CD4-positive, alpha-beta memory T cell (primary cell): ENCODE measurements at regions of chr6 and their contacts with region 1.

Region 1: GRCh38 chr6:26234421-26235296 is 130.3 kb upstream of the BTN3A2 start:
- DNase-seq: peak; percentile 70 to 87 (median 85)
- H3K4me3 ChIP-seq: peak overlapping the region; percentile 66 to 95
- H3K4me3 Mint-ChIP-seq: peak overlapping the region; percentile 93 to 99 (median 96)
- H3K27ac ChIP-seq: peak overlapping the region; percentile 83
- H3K27ac Mint-ChIP-seq: peak overlapping the region; percentile 90 to 99 (median 96)
- H3K4me1 ChIP-seq: peaks cover 23% of the 10 kb centered on the region
- H3K4me1 Mint-ChIP-seq: peaks cover 18 to 43% (median 26%) of the 10 kb centered on the region in 4 donors
- H3K27me3 ChIP-seq: no peaks in the 10 kb centered on the region
- H3K27me3 Mint-ChIP-seq: no peaks in the 10 kb centered on the region

Region 2: GRCh38 chr6:24431045-24431451 is 1803.6 kb before region 1 on chr6:
- CTCF ChIA-PET with region 1: no interaction called
- POLR2A ChIA-PET with region 1: no interaction called
- intact Hi-C with region 1: no loop called
- DNase-seq: peak in 4 of 5 donors; percentile 15 to 33 (median 28)
- H3K4me3 ChIP-seq: no peak overlapping the region
- H3K4me3 Mint-ChIP-seq: no peak overlapping the region
- H3K27ac ChIP-seq: no peak overlapping the region
- H3K27ac Mint-ChIP-seq: no peak overlapping the region
- H3K4me1 ChIP-seq: no peaks in the 10 kb centered on the region
- H3K4me1 Mint-ChIP-seq: peaks cover 0 to 1% (median 0%) of the 10 kb centered on the region in 4 donors
- H3K27me3 ChIP-seq: no peaks in the 10 kb centered on the region
- H3K27me3 Mint-ChIP-seq: no peaks in the 10 kb centered on the region

Region 3: GRCh38 chr6:26054857-26055669 is 179.6 kb before region 1 on chr6:
- CTCF ChIA-PET with region 1: no interaction called
- POLR2A ChIA-PET with region 1: interaction called, 23 read pairs
- intact Hi-C with region 1: no loop called
- DNase-seq: peak; percentile 89 to 96 (median 91)
- H3K4me3 ChIP-seq: peak overlapping the region; percentile 67 to 78
- H3K4me3 Mint-ChIP-seq: peak overlapping the region; percentile 93 to 96 (median 94)
- H3K27ac ChIP-seq: peak overlapping the region; percentile 84
- H3K27ac Mint-ChIP-seq: peak overlapping the region; percentile 91 to 98 (median 98)
- H3K4me1 ChIP-seq: peaks cover 24% of the 10 kb centered on the region
- H3K4me1 Mint-ChIP-seq: peaks cover 7 to 34% (median 15%) of the 10 kb centered on the region in 4 donors
- H3K27me3 ChIP-seq: no peaks in the 10 kb centered on the region
- H3K27me3 Mint-ChIP-seq: no peaks in the 10 kb centered on the region

Region 4: DNA sequence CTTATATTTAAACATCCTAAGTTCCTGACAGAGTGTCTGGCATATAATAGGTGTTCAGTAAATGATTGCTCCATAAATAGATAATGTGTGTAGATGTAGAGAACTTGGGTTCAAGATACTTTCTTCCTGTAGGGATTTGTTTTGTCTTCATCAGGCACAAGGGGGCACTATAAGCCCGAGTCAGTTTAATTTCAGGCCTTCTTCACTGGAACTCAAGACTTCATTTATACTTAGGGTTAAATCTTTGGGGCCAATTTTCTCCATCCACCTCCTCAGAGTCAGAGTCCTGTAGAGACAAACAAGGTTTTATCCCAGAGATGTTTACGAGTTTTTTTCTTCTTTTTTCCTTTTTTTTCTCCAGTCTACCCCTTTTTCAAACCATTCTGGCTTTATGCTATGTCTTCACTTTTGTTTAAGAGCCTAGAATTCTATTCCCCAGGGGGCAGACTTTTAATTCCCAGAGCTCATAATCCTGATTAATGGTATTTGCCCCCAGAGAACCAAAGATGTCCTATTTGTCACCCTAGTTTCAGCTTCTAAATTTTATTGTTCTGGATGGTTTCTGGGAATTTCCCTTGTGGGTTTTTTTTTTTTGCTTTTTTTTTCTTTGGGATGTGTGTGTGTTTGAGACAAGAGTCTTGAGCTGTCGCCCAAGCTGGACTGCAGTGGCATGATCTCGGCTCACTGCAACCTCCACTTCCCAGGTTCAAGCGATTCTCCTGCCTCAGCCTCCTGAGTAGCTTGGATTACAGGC is 59.1 kb before region 1 on chr6:
- CTCF ChIA-PET with region 1: interaction called, 5 read pairs
- POLR2A ChIA-PET with region 1: interaction called, 85 read pairs
- intact Hi-C with region 1: no loop called
- DNase-seq: peak; percentile 50 to 73 (median 70)
- H3K4me3 ChIP-seq: no peak overlapping the region
- H3K4me3 Mint-ChIP-seq: peak overlapping the region in 4 of 8 donors; percentile 37 to 70 (median 65)
- H3K27ac ChIP-seq: no peak overlapping the region
- H3K27ac Mint-ChIP-seq: peak overlapping the region; percentile 28 to 89 (median 78)
- H3K4me1 ChIP-seq: peaks cover 37% of the 10 kb centered on the region
- H3K4me1 Mint-ChIP-seq: peaks cover 21 to 40% (median 27%) of the 10 kb centered on the region in 4 donors
- H3K27me3 ChIP-seq: no peaks in the 10 kb centered on the region
- H3K27me3 Mint-ChIP-seq: no peaks in the 10 kb centered on the region

Region 5: GRCh38 chr6:26196846-26197648 is 37.6 kb before region 1 on chr6:
- CTCF ChIA-PET with region 1: interaction called, 16 read pairs
- POLR2A ChIA-PET with region 1: interaction called, 502 read pairs
- intact Hi-C with region 1: loop called (anchors 1 kb)
- DNase-seq: peak; percentile 92 to 93 (median 92)
- H3K4me3 ChIP-seq: peak overlapping the region; percentile 83 to 97
- H3K4me3 Mint-ChIP-seq: peak overlapping the region; percentile 94 to 99 (median 97)
- H3K27ac ChIP-seq: peak overlapping the region; percentile 84
- H3K27ac Mint-ChIP-seq: peak overlapping the region; percentile 96 to 100 (median 98)
- H3K4me1 ChIP-seq: peaks cover 43% of the 10 kb centered on the region
- H3K4me1 Mint-ChIP-seq: peaks cover 23 to 57% (median 41%) of the 10 kb centered on the region in 4 donors
- H3K27me3 ChIP-seq: no peaks in the 10 kb centered on the region
- H3K27me3 Mint-ChIP-seq: no peaks in the 10 kb centered on the region

Region 6: DNA sequence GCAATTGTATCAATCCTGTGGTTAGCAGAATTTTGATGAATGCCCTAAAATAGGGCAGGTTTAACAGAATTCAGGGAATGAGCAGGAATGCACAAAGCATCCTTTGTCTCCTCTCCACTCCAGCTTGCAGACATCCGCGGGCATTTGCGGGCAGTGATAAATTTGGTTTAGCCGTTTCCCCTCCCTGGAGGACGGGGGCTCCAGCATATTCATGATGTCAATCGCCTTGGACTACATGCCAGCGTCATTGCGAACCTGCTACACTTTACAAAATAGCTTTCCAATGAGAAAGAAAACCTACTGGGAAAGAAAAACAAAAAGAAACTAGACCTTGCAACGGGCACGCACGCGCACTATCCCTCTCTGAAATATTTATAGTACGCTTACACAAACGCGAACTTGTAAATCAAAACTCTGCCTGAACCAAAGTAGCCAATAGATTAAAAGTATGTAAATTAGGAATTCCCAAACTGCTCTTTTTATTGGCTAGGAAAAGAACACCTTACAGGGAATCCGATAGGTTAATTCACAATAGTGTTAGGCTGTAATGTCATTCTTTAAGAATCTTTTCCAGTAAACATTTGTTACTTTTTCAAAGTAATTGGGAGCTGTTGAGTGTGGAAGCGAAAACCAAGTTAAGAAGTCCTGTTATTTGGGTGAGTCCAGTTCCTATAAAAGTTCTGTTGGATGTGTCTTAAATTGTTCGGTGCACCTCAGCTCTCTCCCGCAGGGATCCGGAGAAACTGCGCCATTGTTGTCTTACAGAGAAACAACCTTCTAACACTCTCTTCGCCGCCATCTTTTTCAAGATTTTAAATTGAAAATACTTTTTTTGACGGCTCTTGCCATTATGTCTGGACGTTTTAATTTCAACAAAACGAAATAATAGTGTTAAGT is 10.8 kb before region 1 on chr6:
- CTCF ChIA-PET with region 1: interaction called, 13 read pairs
- POLR2A ChIA-PET with region 1: interaction called, 951 read pairs
- intact Hi-C with region 1: loop called (anchors 1 kb)
- DNase-seq: peak; percentile 74 to 87 (median 84)
- H3K4me3 ChIP-seq: peak overlapping the region; percentile 45 to 82
- H3K4me3 Mint-ChIP-seq: no peak overlapping the region
- H3K27ac ChIP-seq: peak overlapping the region; percentile 69
- H3K27ac Mint-ChIP-seq: no peak overlapping the region
- H3K4me1 ChIP-seq: peaks cover 21% of the 10 kb centered on the region
- H3K4me1 Mint-ChIP-seq: peaks cover 6 to 8% (median 7%) of the 10 kb centered on the region in 4 donors
- H3K27me3 ChIP-seq: no peaks in the 10 kb centered on the region
- H3K27me3 Mint-ChIP-seq: no peaks in the 10 kb centered on the region

Region 7: GRCh38 chr6:26568601-26569432 is 334.2 kb after region 1 on chr6:
- CTCF ChIA-PET with region 1: no interaction called
- POLR2A ChIA-PET with region 1: interaction called, 12 read pairs
- intact Hi-C with region 1: loop called (anchors 5 kb)
- DNase-seq: peak; percentile 96 to 98 (median 97)
- H3K4me3 ChIP-seq: peak overlapping the region; percentile 74 to 82
- H3K4me3 Mint-ChIP-seq: peak overlapping the region; percentile 94 to 99 (median 96)
- H3K27ac ChIP-seq: peak overlapping the region; percentile 62
- H3K27ac Mint-ChIP-seq: peak overlapping the region; percentile 92 to 100 (median 98)
- H3K4me1 ChIP-seq: peaks cover 9% of the 10 kb centered on the region
- H3K4me1 Mint-ChIP-seq: peaks cover 17 to 34% (median 23%) of the 10 kb centered on the region in 4 donors
- H3K27me3 ChIP-seq: no peaks in the 10 kb centered on the region
- H3K27me3 Mint-ChIP-seq: peaks cover 0 to 10% of the 10 kb centered on the region in 2 donors

Region 8: GRCh38 chr6:27871924-27872638 is 1637.4 kb after region 1 on chr6:
- CTCF ChIA-PET with region 1: no interaction called
- POLR2A ChIA-PET with region 1: interaction called, 18 read pairs
- intact Hi-C with region 1: no loop called
- DNase-seq: peak; percentile 91 to 96 (median 94)
- H3K4me3 ChIP-seq: peak overlapping the region; percentile 77 to 89
- H3K4me3 Mint-ChIP-seq: peak overlapping the region; percentile 87 to 94 (median 90)
- H3K27ac ChIP-seq: peak overlapping the region; percentile 86
- H3K27ac Mint-ChIP-seq: peak overlapping the region; percentile 89 to 97 (median 94)
- H3K4me1 ChIP-seq: peaks cover 33% of the 10 kb centered on the region
- H3K4me1 Mint-ChIP-seq: peaks cover 24 to 48% (median 33%) of the 10 kb centered on the region in 4 donors
- H3K27me3 ChIP-seq: no peaks in the 10 kb centered on the region
- H3K27me3 Mint-ChIP-seq: no peaks in the 10 kb centered on the region